ENCODE measurements at regions of chr2 and their contacts with region 1.

Region 1: DNA sequence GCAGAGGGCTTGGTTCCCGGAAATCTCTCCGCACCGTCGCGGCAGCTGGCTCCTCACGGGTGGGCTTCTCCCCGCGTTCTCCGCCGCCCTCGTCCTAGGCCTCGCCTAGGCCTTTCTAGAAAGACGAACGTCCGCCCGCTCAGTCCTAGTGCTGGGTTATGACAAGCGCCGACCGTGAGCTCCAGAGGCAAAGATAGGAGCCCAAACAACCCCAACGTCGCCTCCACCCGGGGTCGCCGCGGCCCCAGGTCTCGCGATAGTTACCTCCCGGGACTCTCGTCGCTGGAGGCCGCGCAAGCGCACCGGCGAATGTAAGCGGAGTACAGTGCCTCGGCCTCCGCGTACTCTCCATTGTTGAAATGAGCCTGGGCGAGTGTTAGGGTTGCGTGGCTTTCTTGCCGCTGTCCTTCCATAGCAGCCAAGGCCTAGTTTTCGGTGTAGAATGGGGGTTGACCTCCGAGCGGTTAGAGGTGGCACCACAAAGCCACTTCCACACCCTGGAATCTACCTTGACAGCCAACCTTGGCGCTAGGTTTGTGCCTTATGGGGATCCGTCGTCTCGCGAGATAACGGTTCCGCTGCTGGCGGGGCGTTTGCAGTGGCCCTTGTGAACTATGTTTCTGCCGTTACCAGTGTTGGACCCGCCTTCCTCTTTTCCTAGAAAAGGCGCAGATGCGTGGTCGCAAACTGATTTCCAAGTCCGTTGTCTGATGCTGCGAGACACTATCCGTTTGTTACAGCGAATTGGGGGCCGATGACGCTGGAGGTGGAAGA is at the start of gene TTC32:
- DNase-seq: peak; percentile 94
- H3K4me3 Mint-ChIP-seq: peak within 1 kb of the TSS; percentile 92
- H3K27ac Mint-ChIP-seq: peak within 1 kb of the TSS; percentile 95
- H3K4me1 Mint-ChIP-seq: peaks cover 38% of the 10 kb centered on the region
- H3K27me3 Mint-ChIP-seq: peaks cover 12% of the 10 kb centered on the region
- total RNA-seq, gene TTC32: 30.7 to 34.8 TPM

Region 2: DNA sequence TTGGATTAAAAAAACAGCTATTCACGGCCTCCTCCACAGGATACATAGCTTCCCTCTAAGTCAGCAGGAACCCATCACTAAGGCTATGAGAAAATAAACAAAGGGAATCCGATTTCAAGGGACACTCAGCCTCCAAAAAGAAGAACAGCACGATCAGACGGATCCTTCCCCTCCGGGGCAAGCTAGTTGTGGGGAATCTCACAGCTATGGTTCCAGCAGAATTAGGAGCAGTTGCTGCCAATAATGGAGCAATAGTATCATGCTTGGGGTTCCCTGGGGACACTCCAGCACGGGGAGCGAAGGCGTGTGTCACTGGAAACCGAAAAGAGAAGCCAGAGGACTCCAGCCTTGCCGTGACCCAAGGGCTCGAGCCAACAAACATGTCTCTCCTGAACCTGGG is 162.9 kb before region 1 on chr2:
- CTCF ChIA-PET with region 1: no interaction called
- POLR2A ChIA-PET with region 1: no interaction called
- DNase-seq: no peak
- H3K4me3 Mint-ChIP-seq: no peak overlapping the region
- H3K27ac Mint-ChIP-seq: no peak overlapping the region
- H3K4me1 Mint-ChIP-seq: no peaks in the 10 kb centered on the region
- H3K27me3 Mint-ChIP-seq: peaks cover 5% of the 10 kb centered on the region

Region 3: GRCh38 chr2:19868705-19869580 is 32.7 kb before region 1 on chr2:
- CTCF ChIA-PET with region 1: no interaction called
- POLR2A ChIA-PET with region 1: interaction called, 21 read pairs
- DNase-seq: peak; percentile 60
- H3K4me3 Mint-ChIP-seq: peak overlapping the region; percentile 85
- H3K27ac Mint-ChIP-seq: peak overlapping the region; percentile 57
- H3K4me1 Mint-ChIP-seq: peaks cover 17% of the 10 kb centered on the region
- H3K27me3 Mint-ChIP-seq: no peaks in the 10 kb centered on the region

Region 4: DNA sequence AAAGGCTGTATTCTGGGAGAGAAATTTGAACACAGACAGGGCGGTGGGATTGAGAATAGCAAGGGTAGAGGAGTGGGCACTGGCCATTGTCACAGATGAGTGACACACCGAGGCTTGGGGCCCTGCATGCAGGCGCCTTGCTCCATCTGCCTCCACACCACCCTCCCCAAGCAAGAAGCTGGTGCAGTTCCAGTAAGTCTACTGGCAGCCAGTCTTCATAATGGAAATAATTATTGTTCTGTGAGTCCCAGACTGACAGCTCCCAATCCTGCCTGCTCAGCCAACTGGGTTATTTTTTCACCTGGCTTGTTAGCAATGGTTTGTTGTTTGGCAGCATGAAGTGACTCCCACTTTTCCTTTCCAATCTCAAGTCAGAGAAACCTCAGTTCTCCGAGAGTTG is 12.8 kb before region 1 on chr2:
- CTCF ChIA-PET with region 1: no interaction called
- POLR2A ChIA-PET with region 1: interaction called, 15 read pairs
- DNase-seq: no peak
- H3K4me3 Mint-ChIP-seq: no peak overlapping the region
- H3K27ac Mint-ChIP-seq: no peak overlapping the region
- H3K4me1 Mint-ChIP-seq: peaks cover 26% of the 10 kb centered on the region
- H3K27me3 Mint-ChIP-seq: no peaks in the 10 kb centered on the region

Region 5: DNA sequence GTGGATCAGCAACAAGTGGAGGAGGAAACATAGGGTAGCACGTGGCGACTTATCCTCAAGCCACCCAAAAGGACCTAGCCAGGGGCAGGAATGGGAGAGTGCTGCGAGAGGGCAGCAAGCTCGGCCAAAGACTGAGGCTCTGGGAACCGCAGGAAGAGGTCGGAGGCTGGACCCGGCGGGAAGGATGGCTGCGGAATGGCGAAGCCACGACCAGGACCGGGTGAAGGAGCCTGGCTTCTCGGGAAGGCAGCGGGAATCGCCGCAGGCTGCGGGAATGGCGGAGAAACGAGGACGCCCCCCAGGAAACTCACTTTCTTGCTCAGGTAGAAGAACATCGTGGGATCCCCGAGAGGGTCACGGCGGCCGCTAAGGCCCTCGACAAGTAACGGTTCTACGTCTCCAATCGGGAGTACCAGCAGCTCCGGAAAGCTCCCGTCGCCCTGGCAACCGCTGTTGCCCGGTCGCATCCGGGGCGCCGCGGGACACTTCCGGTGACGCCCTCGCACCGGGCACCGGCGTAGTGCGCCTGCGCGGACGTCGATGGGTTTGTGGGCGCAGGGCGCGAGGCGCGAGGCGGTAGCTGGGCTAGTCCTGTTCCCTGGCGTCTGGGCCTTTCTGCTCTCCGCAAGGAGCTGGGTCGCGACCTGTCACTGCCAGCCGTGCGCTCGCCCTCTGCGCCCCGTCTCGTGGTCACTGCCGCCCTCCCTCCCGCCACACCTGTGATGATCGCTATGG is 88.2 kb after region 1 on chr2 and contains the start of gene WDR35:
- CTCF ChIA-PET with region 1: no interaction called
- POLR2A ChIA-PET with region 1: interaction called, 13 read pairs
- DNase-seq: peak; percentile 94
- H3K4me3 Mint-ChIP-seq: peak within 1 kb of the TSS; percentile 85
- H3K27ac Mint-ChIP-seq: peak within 1 kb of the TSS; percentile 53
- H3K4me1 Mint-ChIP-seq: peaks cover 31% of the 10 kb centered on the region
- H3K27me3 Mint-ChIP-seq: peaks cover 27% of the 10 kb centered on the region
- total RNA-seq, gene WDR35: 4.5 to 4.7 TPM